ENCODE measurements at regions of chr7 and their contacts with region 1.

Region 1: GRCh38 chr7:351681-352480 is 61.9 kb downstream of the FOXL3 start:
- DNase-seq: peak; percentile 59
- ATAC-seq: peak; percentile 76
- H3K4me3 Mint-ChIP-seq: peak overlapping the region; percentile 67
- H3K27ac Mint-ChIP-seq: peak overlapping the region; percentile 76
- H3K4me1 Mint-ChIP-seq: peaks cover 10% of the 10 kb centered on the region
- H3K27me3 Mint-ChIP-seq: peaks cover 4% of the 10 kb centered on the region

Region 2: GRCh38 chr7:166338-167060 is 185.4 kb before region 1 on chr7:
- CTCF ChIA-PET with region 1: no interaction called
- DNase-seq: no peak
- ATAC-seq: no peak
- H3K4me3 Mint-ChIP-seq: no peak overlapping the region
- H3K27ac Mint-ChIP-seq: no peak overlapping the region
- H3K4me1 Mint-ChIP-seq: no peaks in the 10 kb centered on the region
- H3K27me3 Mint-ChIP-seq: peaks cover 6% of the 10 kb centered on the region

Region 3: GRCh38 chr7:362402-363096 is 10.7 kb after region 1 on chr7:
- CTCF ChIA-PET with region 1: interaction called, 10 read pairs
- DNase-seq: peak; percentile 68
- ATAC-seq: peak; percentile 73
- H3K4me3 Mint-ChIP-seq: peak overlapping the region; percentile 66
- H3K27ac Mint-ChIP-seq: peak overlapping the region; percentile 92
- H3K4me1 Mint-ChIP-seq: peaks cover 60% of the 10 kb centered on the region
- H3K27me3 Mint-ChIP-seq: peaks cover 7% of the 10 kb centered on the region

Measured in activated CD8-positive, alpha-beta memory T cell treated with anti-CD3 and anti-CD28 coated beads, Interleukin-2, amount 10 ng/mL, durations not matched to agents 7 days and 5 days (primary cell).